Calu3 (cell line): ENCODE measurements at regions of chr10 and their contacts with region 1.

Region 1: GRCh38 chr10:75401569-75402485 is at the start of gene ZNF503:
- DNase-seq: peak; percentile 98
- H3K4me3 Mint-ChIP-seq: peak within 1 kb of the TSS; percentile 95
- H3K27ac Mint-ChIP-seq: peak within 1 kb of the TSS; percentile 72
- H3K4me1 Mint-ChIP-seq: peaks cover 17% of the 10 kb centered on the region
- H3K27me3 Mint-ChIP-seq: no peaks in the 10 kb centered on the region
- CTCF ChIP-seq: no peak
- total RNA-seq, gene ZNF503: 12.5 and 12.8 TPM in 2 replicates

Region 2: DNA sequence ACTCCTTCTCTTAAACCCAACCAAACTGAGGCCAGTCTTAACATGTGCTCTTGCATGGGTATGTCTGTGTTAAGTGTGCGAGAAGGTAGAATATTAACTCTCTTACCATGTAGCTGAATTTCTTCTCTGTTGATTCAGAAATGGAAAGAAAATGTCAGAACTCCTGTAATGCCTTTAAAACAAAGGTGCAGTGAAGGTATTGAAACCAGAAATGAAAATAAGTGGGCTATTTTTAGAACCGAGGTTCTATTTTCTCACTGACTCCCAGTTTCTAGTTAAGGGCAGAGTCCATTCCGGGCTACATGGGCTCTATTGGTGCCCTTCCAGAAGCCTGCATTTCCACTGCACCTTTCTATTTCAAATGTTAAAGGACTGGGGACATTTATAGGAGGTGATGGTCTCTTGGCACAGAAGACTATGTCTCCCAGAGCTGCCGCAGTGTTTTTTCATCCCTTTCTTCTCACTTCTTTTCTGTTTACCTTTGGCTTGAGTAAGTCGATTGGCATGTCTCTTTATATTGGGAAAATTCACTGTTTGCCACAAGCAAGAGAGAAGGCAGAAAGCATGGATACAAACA is 204.5 kb after region 1 on chr10:
- CTCF ChIA-PET with region 1: no interaction called
- intact Hi-C with region 1: loop called (anchors 10 kb)
- DNase-seq: no peak
- H3K4me3 Mint-ChIP-seq: no peak overlapping the region
- H3K27ac Mint-ChIP-seq: no peak overlapping the region
- H3K4me1 Mint-ChIP-seq: no peaks in the 10 kb centered on the region
- H3K27me3 Mint-ChIP-seq: peaks cover 33% of the 10 kb centered on the region
- CTCF ChIP-seq: no peak

Region 3: DNA sequence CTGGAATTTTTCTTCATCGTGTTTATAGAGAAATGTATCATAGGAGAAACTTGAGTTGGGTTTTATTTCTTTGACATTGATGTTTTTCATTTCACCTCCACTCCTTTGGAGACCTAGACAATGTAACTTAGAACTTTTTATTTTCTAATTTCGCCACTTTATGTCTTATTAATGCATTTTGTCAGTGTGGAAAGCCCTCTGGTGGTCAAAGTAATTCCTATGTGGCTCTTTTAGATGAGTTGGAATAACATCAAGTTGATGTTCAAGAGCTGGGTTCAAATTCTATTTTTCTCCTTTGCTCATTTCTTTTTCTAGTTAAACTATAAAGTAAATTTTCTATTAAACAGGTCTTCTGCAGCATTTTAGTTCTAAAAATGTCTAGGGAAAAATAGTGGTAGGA is 508.2 kb after region 1 on chr10:
- CTCF ChIA-PET with region 1: interaction called, 5 read pairs
- intact Hi-C with region 1: loop called (anchors 1 kb)
- DNase-seq: no peak
- H3K4me3 Mint-ChIP-seq: no peak overlapping the region
- H3K27ac Mint-ChIP-seq: no peak overlapping the region
- H3K4me1 Mint-ChIP-seq: no peaks in the 10 kb centered on the region
- H3K27me3 Mint-ChIP-seq: peaks cover 41% of the 10 kb centered on the region
- CTCF ChIP-seq: peak; percentile 17

Region 4: GRCh38 chr10:76036111-76036940 is 634.5 kb after region 1 on chr10:
- CTCF ChIA-PET with region 1: interaction called, 12 read pairs
- intact Hi-C with region 1: loop called (anchors 2 kb)
- DNase-seq: peak; percentile 87
- H3K4me3 Mint-ChIP-seq: no peak overlapping the region
- H3K27ac Mint-ChIP-seq: no peak overlapping the region
- H3K4me1 Mint-ChIP-seq: peaks cover 20% of the 10 kb centered on the region
- H3K27me3 Mint-ChIP-seq: no peaks in the 10 kb centered on the region
- CTCF ChIP-seq: peak; percentile 92

Region 5: DNA sequence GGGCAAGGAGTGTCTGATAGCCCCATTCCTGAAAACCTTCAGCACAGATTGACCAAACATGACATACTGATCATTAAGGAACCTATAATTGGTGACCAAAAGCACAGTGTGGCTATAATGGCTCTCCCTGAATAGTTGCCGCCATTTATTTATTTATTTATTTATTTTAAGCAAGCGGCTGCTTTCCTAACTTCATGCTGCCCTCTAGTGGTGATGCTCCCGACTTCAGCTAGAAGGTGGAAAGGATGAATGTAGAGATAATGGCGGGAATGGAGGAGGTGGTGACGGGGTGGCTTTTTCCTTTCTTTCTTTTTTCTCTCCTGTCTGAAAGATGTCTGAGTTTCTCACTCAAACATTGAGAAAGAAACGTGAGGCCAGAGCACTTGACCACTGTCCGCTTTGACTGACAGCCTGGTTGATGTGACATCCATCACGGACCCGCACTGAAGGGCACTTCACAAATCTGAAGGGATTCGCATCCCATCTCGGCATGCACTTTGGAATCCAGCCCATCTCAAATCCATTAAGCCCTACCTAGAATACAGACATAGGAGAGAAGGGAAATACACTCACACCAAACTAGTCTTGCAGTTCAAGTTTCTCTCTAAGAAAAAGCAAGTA is 1145.6 kb after region 1 on chr10:
- CTCF ChIA-PET with region 1: no interaction called
- intact Hi-C with region 1: loop called (anchors 10 kb)
- DNase-seq: peak; percentile 85
- H3K4me3 Mint-ChIP-seq: no peak overlapping the region
- H3K27ac Mint-ChIP-seq: no peak overlapping the region
- H3K4me1 Mint-ChIP-seq: no peaks in the 10 kb centered on the region
- H3K27me3 Mint-ChIP-seq: peaks cover 8% of the 10 kb centered on the region
- CTCF ChIP-seq: peak; percentile 73